Left cardiac atrium (tissue), 4 donors: ENCODE measurements at regions of chr3 and their contacts with region 1.

Region 1: GRCh38 chr3:140559546-140559945 is 118.3 kb upstream of the TRIM42 start:
- DNase-seq: no peak
- ATAC-seq: no peak

Region 2: GRCh38 chr3:140627756-140628155 is 68.2 kb after region 1 on chr3:
- intact Hi-C with region 1: no loop called
- DNase-seq: no peak
- ATAC-seq: no peak

Region 3: GRCh38 chr3:140736863-140737460 is 177.4 kb after region 1 on chr3:
- intact Hi-C with region 1: loop called in 1 of 2 experiments (anchors 5 kb)
- DNase-seq: peak; percentile 57
- ATAC-seq: peak; percentile 78 to 89